GM10248 (cell line): ENCODE measurements at regions of chr11 and their contacts with region 1.

Region 1: GRCh38 chr11:47552566-47553416 is at the start of gene CELF1:
- DNase-seq: peak; percentile 94
- CTCF ChIP-seq: peak; percentile 87

Region 2: DNA sequence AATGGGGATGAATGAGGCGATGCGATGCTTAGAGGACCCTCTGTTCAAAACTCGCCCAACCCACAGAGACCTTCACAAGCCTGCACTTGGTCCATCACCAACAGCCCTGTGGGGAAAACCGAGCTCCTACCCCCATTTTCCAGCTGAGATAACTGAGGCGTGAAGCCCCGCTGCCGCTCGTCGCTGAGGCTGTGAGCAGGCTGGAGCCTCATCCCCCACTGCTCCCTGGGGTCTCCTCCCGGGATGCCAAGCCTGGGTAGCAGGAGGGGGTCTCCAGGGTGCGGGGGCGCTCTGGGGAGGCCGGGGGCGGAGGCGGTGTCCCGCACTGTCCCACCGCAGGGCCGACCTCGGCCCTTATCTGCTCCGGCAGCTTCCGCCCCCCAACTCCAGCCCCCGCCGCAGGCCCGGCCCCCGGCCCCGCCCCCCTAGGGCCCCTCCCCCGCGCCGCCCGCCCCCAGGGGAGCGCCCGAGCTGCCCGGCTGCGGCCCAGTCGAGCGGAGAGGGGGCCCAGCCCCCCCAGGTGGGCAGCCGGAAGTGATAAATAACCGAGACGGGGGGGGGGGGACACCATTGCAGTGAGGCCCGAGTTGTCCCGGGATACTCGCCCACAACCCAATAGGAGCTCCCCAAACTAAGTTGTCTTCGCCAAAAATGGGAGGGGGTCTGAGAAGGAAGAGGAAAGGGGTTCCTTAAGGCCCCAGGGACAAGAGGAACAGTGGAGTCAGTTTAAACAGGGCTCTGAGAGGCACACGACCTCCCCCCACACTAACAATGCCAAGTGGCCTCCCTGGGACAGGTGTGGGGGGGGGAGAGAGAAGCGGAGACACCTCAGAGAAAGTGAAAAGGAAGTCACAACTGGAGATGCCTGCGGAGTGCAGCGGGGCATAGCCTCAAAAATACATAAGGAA is 152.7 kb before region 1 on chr11:
- CTCF ChIA-PET with region 1: no interaction called
- POLR2A ChIA-PET with region 1: no interaction called
- DNase-seq: peak; percentile 77
- CTCF ChIP-seq: no peak

Region 3: GRCh38 chr11:47509077-47509536 is 43.7 kb before region 1 on chr11:
- CTCF ChIA-PET with region 1: interaction called, 18 read pairs
- POLR2A ChIA-PET with region 1: no interaction called
- DNase-seq: peak; percentile 45
- CTCF ChIP-seq: no peak

Region 4: GRCh38 chr11:47514825-47515647 is 37.8 kb before region 1 on chr11:
- CTCF ChIA-PET with region 1: interaction called, 18 read pairs
- POLR2A ChIA-PET with region 1: no interaction called
- DNase-seq: no peak
- CTCF ChIP-seq: no peak

Region 5: DNA sequence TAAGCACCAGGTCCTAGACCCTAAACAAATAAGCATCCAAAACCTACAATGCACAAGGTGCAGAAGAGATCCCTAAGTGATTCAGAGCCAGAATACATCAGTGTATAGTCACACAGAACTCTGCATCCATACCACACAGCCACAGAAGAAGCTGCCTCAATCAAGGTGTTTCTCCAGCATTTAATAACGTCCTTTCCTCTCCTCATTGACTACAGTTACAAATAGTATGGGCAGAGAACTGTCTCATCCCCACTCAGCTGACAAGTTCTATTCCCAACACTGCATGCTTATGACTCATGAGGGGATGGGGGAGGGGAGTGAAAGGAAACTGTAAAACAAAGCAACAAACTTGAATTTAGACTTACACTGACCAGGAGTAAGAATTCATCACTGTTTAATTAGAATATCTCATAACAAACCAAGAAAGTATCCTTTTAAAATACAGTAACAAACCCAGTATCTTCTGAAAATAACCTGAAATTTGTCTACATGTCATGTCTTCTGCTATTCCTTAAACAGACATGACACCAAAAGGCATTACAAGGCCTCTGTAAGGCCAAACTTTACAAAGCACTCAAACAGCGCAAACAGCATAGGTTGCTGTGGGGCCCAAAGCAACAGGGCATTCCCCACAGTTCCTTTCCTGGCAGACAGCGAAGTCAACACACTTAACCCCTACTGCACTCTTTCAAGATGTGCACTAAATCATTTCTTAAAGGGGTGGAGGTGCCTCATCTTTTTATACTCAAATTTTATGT is 29.1 kb before region 1 on chr11:
- CTCF ChIA-PET with region 1: interaction called, 125 read pairs
- POLR2A ChIA-PET with region 1: no interaction called
- DNase-seq: no peak
- CTCF ChIP-seq: no peak

Region 6: DNA sequence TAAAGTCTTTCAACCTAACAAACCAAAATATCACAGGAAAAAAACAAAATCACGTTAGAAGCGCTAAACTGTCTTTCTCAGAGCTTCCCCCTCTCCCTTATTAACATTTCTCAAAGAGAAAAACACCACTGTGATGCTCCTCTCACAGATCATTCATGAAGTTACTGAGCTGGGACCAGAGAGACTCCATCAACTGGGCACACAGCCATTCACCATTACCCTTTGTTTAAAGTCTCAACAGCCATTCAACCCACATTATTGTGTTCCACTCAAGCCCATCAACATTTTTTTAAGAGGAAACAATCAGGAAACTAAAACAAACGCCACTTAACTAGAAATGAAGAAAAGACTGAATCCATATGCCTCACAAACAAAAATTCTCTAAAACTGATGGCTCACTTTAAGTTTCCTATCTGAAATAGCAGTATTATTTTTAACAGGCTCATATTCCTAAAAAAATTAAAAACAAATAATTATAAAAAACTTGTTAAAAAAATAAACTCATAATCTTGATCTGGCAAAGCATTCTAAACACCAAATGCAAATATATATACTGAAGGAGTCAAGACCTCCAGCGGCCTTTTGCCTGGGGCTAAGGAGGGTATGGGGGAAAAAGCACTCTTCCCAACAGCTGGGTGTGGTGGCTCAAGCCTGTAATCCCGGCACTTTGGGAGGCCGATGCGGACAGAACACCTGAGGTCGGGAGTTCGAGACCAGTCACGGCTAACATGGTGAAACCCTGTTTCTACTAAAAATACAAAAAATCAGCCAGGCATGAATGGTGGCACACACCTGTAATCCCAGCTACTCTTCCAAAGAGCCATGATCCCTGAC is 13.8 kb before region 1 on chr11:
- CTCF ChIA-PET with region 1: interaction called, 125 read pairs
- POLR2A ChIA-PET with region 1: no interaction called
- DNase-seq: no peak
- CTCF ChIP-seq: no peak

Region 7: DNA sequence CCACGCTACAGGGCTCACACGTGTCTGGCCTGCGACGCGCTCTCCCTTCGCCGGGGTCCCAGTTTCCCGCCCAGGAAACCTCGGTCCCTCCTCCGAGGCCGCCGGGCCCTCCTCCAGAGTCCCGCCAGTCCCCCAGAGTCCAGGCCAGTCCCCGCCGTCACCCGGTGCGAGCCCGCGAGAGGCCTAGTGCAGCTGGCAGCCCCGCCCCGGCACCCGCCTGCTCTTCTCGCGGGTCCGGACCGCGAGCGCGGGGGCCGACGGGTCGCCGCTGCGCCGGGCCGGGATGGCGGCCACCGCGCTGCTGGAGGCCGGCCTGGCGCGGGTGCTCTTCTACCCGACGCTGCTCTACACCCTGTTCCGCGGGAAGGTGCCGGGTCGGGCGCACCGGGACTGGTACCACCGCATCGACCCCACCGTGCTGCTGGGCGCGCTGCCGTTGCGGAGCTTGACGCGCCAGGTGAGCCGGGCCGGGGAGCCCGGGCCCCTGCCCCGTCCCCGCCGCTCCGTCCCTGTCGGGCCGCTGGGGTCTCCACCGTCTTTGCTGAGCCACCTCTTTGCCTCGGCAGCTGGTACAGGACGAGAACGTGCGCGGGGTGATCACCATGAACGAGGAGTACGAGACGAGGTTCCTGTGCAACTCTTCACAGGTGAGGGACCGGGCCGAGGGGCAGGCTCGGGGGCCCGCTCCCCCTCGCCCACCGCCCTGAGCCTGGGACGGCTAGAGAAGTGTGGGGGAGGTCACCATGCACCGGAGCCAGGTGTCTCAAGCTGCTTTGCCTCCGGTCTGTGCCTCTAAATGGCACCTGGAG is 12.8 kb after region 1 on chr11 and contains the start of gene PTPMT1:
- CTCF ChIA-PET with region 1: interaction called, 43 read pairs
- POLR2A ChIA-PET with region 1: no interaction called
- DNase-seq: peak; percentile 88
- CTCF ChIP-seq: no peak

Region 8: DNA sequence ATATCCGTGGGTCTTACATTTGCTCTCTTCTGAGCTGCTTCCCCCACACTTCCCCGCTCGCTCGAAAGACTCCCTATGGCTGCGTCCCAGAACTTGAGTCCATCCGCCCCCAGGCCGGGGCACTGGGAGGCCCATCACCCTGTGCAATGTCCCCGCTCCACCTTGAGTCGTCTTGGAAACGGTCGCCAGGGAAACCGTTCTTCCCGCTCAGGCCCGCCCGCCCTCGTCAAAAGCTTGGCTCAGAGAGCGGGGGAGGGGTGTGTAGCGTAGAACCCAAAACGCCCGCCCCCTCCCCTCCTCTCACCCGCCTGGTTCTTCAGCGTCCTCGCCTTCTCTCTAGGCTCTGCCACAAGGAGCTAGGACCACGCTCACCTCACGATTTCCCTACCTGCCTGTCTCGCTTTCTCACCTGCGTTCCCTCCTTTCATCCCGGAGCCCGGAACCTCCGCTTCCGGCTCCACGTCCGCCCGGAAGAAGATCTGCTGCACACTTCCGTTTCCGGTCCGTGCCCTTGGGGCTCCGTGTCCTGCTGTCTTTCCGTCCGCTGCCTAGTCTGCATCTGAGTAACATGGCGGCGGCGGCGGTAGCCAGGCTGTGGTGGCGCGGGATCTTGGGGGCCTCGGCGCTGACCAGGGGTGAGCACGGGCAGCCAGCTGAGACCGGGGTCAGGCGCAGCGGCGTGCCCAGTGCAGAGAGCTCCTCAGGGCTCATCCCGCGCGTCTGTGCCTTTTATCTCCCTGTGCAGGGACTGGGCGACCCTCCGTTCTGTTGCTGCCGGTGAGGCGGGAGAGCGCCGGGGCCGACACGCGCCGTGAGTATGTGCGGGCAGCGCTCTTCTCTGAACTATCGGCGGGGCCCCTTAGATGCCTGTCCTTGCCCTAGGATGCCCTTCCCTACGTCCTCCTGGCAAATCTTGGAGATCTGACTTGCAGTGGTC is 26.0 kb after region 1 on chr11 and contains the starts of genes KBTBD4 and NDUFS3:
- CTCF ChIA-PET with region 1: interaction called, 24 read pairs
- POLR2A ChIA-PET with region 1: interaction called, 3 read pairs
- DNase-seq: peak; percentile 93
- CTCF ChIP-seq: no peak

Region 9: DNA sequence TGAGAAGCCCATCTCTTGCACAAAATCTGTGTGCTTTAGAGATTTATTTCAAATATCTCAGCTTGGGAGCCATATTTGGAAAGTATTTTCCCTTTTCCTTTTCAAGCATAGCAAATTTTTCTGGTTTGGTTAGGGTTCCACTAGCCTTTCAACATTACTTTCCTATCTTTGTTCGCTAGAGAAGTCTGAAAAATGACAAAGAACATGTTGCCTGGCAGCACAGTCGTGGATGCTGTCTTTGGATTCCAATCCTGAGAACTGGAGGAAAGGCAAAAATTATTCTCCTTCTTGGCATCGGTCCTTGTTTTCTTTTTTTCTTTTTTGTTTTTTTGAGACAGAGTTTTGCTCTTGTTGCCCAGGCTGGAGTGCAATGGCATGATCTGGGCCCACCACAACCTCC is 96.5 kb after region 1 on chr11:
- CTCF ChIA-PET with region 1: no interaction called
- POLR2A ChIA-PET with region 1: no interaction called
- DNase-seq: no peak
- CTCF ChIP-seq: no peak